ENCODE measurements at regions of chr10 and their contacts with region 1.

Region 1: GRCh38 chr10:84537447-84537931 is 209.1 kb downstream of the CCSER2 start:
- DNase-seq: peak; percentile 46
- ATAC-seq: peak; percentile 85
- H3K4me3 ChIP-seq: no peak overlapping the region
- H3K27ac ChIP-seq: no peak overlapping the region
- H3K4me1 ChIP-seq: peaks cover 6% of the 10 kb centered on the region
- H3K27me3 ChIP-seq: no peaks in the 10 kb centered on the region
- CTCF ChIP-seq: peak; percentile 90

Region 2: GRCh38 chr10:84156768-84157167 is 380.7 kb before region 1 on chr10:
- CTCF ChIA-PET with region 1: no interaction called
- POLR2A ChIA-PET with region 1: no interaction called
- in situ Hi-C with region 1: no loop called
- intact Hi-C with region 1: loop called (anchors 10 kb)
- DNase-seq: peak; percentile 25
- ATAC-seq: peak; percentile 79
- H3K4me3 ChIP-seq: no peak overlapping the region
- H3K27ac ChIP-seq: no peak overlapping the region
- H3K4me1 ChIP-seq: no peaks in the 10 kb centered on the region
- H3K27me3 ChIP-seq: no peaks in the 10 kb centered on the region
- CTCF ChIP-seq: no peak

Region 3: DNA sequence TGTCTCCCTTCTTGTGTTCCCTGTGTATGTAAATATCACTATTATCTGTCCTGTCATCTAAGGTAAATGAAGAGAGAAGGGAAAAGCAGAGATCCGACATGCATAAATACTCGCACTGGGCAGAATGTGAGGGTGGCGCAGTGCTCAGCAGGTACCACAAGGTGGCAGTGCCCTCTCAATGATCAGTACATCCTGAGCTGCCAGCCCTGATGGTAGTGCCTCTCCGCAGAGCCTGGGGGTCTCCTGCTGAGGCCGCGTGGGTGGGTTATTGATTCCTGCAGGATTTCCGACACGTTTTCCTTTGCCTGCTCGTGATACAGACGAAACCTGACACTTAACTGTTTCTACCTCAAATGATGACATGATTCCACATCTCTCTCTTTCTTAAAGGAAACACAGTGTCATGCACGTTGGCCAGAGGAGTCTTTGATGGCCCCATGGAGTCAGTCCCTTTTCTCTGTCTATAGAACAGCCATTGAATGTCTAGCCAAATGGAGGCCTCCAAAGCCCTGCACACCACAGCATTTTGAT is 272.8 kb before region 1 on chr10:
- CTCF ChIA-PET with region 1: interaction called, 11 read pairs
- POLR2A ChIA-PET with region 1: no interaction called
- in situ Hi-C with region 1: no loop called
- intact Hi-C with region 1: loop called (anchors 1 kb)
- DNase-seq: peak; percentile 73
- ATAC-seq: peak; percentile 96
- H3K4me3 ChIP-seq: no peak overlapping the region
- H3K27ac ChIP-seq: no peak overlapping the region
- H3K4me1 ChIP-seq: no peaks in the 10 kb centered on the region
- H3K27me3 ChIP-seq: peaks cover 3% of the 10 kb centered on the region; the same call in 1 of the 2 replicates
- CTCF ChIP-seq: peak; percentile 98

Region 4: GRCh38 chr10:84340632-84341537 is 196.6 kb before region 1 on chr10:
- CTCF ChIA-PET with region 1: interaction called, 11 read pairs
- POLR2A ChIA-PET with region 1: no interaction called
- in situ Hi-C with region 1: no loop called
- intact Hi-C with region 1: no loop called
- DNase-seq: no peak
- ATAC-seq: no peak
- H3K4me3 ChIP-seq: no peak overlapping the region
- H3K27ac ChIP-seq: no peak overlapping the region
- H3K4me1 ChIP-seq: no peaks in the 10 kb centered on the region
- H3K27me3 ChIP-seq: no peaks in the 10 kb centered on the region
- CTCF ChIP-seq: no peak

Region 5: DNA sequence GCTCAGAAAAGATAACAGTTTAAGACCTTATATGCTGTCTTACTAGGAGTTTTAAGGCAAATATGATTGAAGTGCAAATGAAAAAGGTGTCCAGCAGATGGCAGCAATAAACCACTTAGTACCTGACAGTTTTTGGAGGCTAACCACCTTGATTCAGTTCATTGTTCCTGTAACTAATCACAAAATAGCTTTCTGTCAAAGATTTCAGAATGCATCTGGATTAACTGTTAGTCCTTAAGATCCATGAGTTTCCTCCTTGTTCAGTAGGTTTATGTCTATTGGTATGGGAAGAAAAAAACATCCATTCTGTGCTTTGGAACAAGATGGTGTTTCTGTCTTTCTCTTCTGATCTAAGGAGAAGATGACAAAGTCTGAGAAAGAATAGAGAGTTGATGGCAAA is 162.5 kb before region 1 on chr10:
- CTCF ChIA-PET with region 1: interaction called, 3 read pairs
- POLR2A ChIA-PET with region 1: no interaction called
- in situ Hi-C with region 1: no loop called
- intact Hi-C with region 1: loop called (anchors 1 kb)
- DNase-seq: peak; percentile 62
- ATAC-seq: peak; percentile 58; the same call in 1 of the 2 replicates
- H3K4me3 ChIP-seq: no peak overlapping the region
- H3K27ac ChIP-seq: no peak overlapping the region
- H3K4me1 ChIP-seq: no peaks in the 10 kb centered on the region
- H3K27me3 ChIP-seq: no peaks in the 10 kb centered on the region
- CTCF ChIP-seq: peak; percentile 77; the same call in 1 of the 2 replicates

Region 6: GRCh38 chr10:84429926-84430520 is 107.5 kb before region 1 on chr10:
- CTCF ChIA-PET with region 1: interaction called, 9 read pairs
- POLR2A ChIA-PET with region 1: no interaction called
- in situ Hi-C with region 1: no loop called
- intact Hi-C with region 1: loop called (anchors 2 kb)
- DNase-seq: peak; percentile 55
- ATAC-seq: peak; percentile 83
- H3K4me3 ChIP-seq: no peak overlapping the region
- H3K27ac ChIP-seq: no peak overlapping the region
- H3K4me1 ChIP-seq: peaks cover 3% of the 10 kb centered on the region; the same call in 1 of the 2 replicates
- H3K27me3 ChIP-seq: no peaks in the 10 kb centered on the region
- CTCF ChIP-seq: peak; percentile 92

Region 7: GRCh38 chr10:84743483-84743882 is 206.0 kb after region 1 on chr10:
- CTCF ChIA-PET with region 1: no interaction called
- POLR2A ChIA-PET with region 1: no interaction called
- in situ Hi-C with region 1: no loop called
- intact Hi-C with region 1: loop called (anchors 2 kb)
- DNase-seq: no peak
- ATAC-seq: no peak
- H3K4me3 ChIP-seq: no peak overlapping the region
- H3K27ac ChIP-seq: no peak overlapping the region
- H3K4me1 ChIP-seq: no peaks in the 10 kb centered on the region
- H3K27me3 ChIP-seq: no peaks in the 10 kb centered on the region
- CTCF ChIP-seq: peak; percentile 62

Measured in Panc1 (cell line).